ENCODE measurements at regions of chr13 and their contacts with region 1.

Region 1: DNA sequence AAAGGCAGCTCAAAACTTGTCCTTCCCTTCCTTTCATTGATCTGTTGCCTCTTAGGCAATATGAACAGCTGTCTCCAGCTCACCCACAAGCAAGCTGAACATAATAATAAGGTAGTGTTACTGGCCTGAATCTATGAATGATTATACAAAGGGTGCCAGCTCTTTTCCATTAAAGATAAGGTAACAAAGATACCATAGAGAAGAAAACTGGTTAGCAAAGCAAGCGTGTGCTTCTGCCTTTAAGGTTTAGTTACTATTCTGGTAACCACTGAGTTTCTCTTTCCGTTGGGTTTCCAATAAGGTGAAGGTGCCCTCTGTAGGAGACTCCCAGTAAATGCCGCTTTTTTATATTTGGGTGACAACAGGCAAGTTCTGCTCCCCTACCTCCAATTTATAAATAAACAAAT is 12.1 kb upstream of the DACH1 start:
- DNase-seq: peak; percentile 75
- H3K4me3 ChIP-seq: no peak overlapping the region
- H3K27ac ChIP-seq: no peak overlapping the region
- H3K4me1 ChIP-seq: no peaks in the 10 kb centered on the region
- H3K27me3 ChIP-seq: no peaks in the 10 kb centered on the region
- CTCF ChIP-seq: peak; percentile 39 to 61
- POLR2A ChIP-seq: no peak

Region 2: GRCh38 chr13:70613295-70613694 is 1265.8 kb before region 1 on chr13:
- CTCF ChIA-PET with region 1: interaction called, 9 read pairs
- POLR2A ChIA-PET with region 1: no interaction called
- dilution Hi-C with region 1: no loop called
- intact Hi-C with region 1: loop called (anchors 1 kb)
- DNase-seq: peak; percentile 25
- H3K4me3 ChIP-seq: no peak overlapping the region
- H3K27ac ChIP-seq: no peak overlapping the region
- H3K4me1 ChIP-seq: no peaks in the 10 kb centered on the region
- H3K27me3 ChIP-seq: no peaks in the 10 kb centered on the region
- CTCF ChIP-seq: peak; percentile 25 to 33
- POLR2A ChIP-seq: no peak

Region 3: GRCh38 chr13:71285700-71286099 is 593.4 kb before region 1 on chr13:
- CTCF ChIA-PET with region 1: interaction called, 10 read pairs
- POLR2A ChIA-PET with region 1: no interaction called
- dilution Hi-C with region 1: no loop called
- intact Hi-C with region 1: no loop called
- DNase-seq: no peak
- H3K4me3 ChIP-seq: no peak overlapping the region
- H3K27ac ChIP-seq: no peak overlapping the region
- H3K4me1 ChIP-seq: no peaks in the 10 kb centered on the region
- H3K27me3 ChIP-seq: no peaks in the 10 kb centered on the region
- CTCF ChIP-seq: no peak
- POLR2A ChIP-seq: no peak

Region 4: GRCh38 chr13:71303144-71303543 is 576.0 kb before region 1 on chr13:
- CTCF ChIA-PET with region 1: interaction called, 15 read pairs
- POLR2A ChIA-PET with region 1: no interaction called
- dilution Hi-C with region 1: no loop called
- intact Hi-C with region 1: no loop called
- DNase-seq: no peak
- H3K4me3 ChIP-seq: no peak overlapping the region
- H3K27ac ChIP-seq: no peak overlapping the region
- H3K4me1 ChIP-seq: no peaks in the 10 kb centered on the region
- H3K27me3 ChIP-seq: no peaks in the 10 kb centered on the region
- CTCF ChIP-seq: no peak
- POLR2A ChIP-seq: no peak

Region 5: DNA sequence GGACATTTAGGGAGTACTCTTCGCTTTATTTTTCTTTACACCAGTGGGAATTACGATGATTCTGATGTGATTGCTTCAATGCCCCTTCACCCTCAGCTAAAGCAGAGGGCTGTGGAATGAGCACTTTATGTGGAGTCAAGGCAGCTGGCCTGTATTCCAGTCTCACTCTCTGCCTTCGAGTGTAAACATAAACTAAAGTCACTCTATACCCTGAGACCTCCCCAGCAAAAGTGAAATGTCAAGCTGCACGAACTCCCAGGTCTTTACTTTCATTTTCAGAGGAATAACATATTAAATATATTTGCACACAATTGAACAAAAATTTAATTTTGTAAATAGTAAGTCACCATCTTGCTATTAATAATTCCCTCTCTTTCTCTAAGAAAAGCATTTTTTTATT is 569.2 kb before region 1 on chr13:
- CTCF ChIA-PET with region 1: interaction called, 11 read pairs
- POLR2A ChIA-PET with region 1: no interaction called
- dilution Hi-C with region 1: no loop called
- intact Hi-C with region 1: no loop called
- DNase-seq: no peak
- H3K4me3 ChIP-seq: no peak overlapping the region
- H3K27ac ChIP-seq: no peak overlapping the region
- H3K4me1 ChIP-seq: no peaks in the 10 kb centered on the region
- H3K27me3 ChIP-seq: no peaks in the 10 kb centered on the region
- CTCF ChIP-seq: no peak
- POLR2A ChIP-seq: no peak

Region 6: DNA sequence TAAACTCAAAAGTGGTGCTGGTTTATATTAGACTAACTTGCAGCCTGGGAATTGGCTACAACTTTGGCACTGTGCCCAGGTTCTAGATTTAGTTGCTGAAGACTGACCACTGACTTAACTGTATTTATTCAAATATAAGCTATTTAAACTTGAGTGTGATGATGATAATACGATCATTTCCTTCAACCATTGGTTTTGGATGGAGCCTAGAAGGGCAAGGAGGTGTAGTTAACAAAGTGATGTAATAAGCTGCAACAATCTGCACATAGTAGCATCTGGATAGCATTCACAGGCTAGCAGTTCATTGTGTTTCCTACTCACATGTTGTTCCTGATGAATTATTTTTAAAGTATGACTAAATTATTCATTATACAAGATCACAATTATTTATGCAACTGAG is 43.1 kb after region 1 on chr13:
- CTCF ChIA-PET with region 1: no interaction called
- POLR2A ChIA-PET with region 1: no interaction called
- dilution Hi-C with region 1: no loop called
- intact Hi-C with region 1: no loop called
- DNase-seq: no peak
- H3K4me3 ChIP-seq: no peak overlapping the region
- H3K27ac ChIP-seq: no peak overlapping the region
- H3K4me1 ChIP-seq: no peaks in the 10 kb centered on the region
- H3K27me3 ChIP-seq: no peaks in the 10 kb centered on the region
- CTCF ChIP-seq: no peak
- POLR2A ChIP-seq: no peak

Region 7: DNA sequence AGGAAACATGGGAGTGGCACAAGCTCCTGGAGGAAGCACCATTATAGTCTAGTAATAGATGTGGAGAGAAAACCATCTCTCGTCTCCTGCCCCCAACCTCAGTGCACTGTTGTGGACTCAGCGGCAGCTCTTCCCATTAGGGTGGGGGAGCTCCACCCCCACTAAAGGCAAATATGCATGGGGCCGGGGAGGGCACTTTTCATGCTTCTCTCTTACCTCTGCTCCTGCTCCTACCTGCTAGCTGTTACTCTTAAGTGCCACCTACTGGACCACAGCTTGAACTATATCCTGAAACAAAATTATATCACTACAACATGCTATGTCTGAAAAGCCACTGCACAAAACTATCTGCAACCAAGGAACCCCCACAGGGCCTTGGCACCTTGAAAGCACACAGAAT is 100.5 kb after region 1 on chr13:
- CTCF ChIA-PET with region 1: interaction called, 14 read pairs
- POLR2A ChIA-PET with region 1: no interaction called
- dilution Hi-C with region 1: no loop called
- intact Hi-C with region 1: no loop called
- DNase-seq: peak; percentile 33
- H3K4me3 ChIP-seq: no peak overlapping the region
- H3K27ac ChIP-seq: no peak overlapping the region
- H3K4me1 ChIP-seq: no peaks in the 10 kb centered on the region
- H3K27me3 ChIP-seq: no peaks in the 10 kb centered on the region
- CTCF ChIP-seq: peak; percentile 13 to 43
- POLR2A ChIP-seq: no peak